Common myeloid progenitor, CD34-positive (primary cell): ENCODE measurements at regions of chr12 and their contacts with region 1.

Region 1: GRCh38 chr12:57520053-57520871 is at the start of gene DDIT3:
- DNase-seq: peak; percentile 99
- H3K4me3 ChIP-seq: peak within 1 kb of the TSS; percentile 75 to 99 (median 96)
- H3K27ac ChIP-seq: peak within 1 kb of the TSS; percentile 99 to 100
- H3K4me1 ChIP-seq: peaks cover 14 to 53% (median 52%) of the 10 kb centered on the region in 4 experiments
- H3K27me3 ChIP-seq: no peaks in the 10 kb centered on the region

Region 2: GRCh38 chr12:57476162-57476992 is 43.9 kb before region 1 on chr12:
- CTCF ChIA-PET with region 1: interaction called, 22 read pairs
- POLR2A ChIA-PET with region 1: interaction called, 19 read pairs
- DNase-seq: peak in 2 of 3 donors; percentile 80 to 83
- H3K4me3 ChIP-seq: peak overlapping the region; percentile 52 to 92 (median 76)
- H3K27ac ChIP-seq: peak overlapping the region; percentile 96
- H3K4me1 ChIP-seq: peaks cover 24 to 66% (median 61%) of the 10 kb centered on the region in 4 experiments
- H3K27me3 ChIP-seq: no peaks in the 10 kb centered on the region

Region 3: GRCh38 chr12:57535764-57536596 is 15.7 kb after region 1 on chr12:
- CTCF ChIA-PET with region 1: interaction called, 24 read pairs
- POLR2A ChIA-PET with region 1: interaction called, 13 read pairs
- DNase-seq: no peak
- H3K4me3 ChIP-seq: no peak overlapping the region
- H3K27ac ChIP-seq: no peak overlapping the region
- H3K4me1 ChIP-seq: peaks cover 0 to 11% (median 0%) of the 10 kb centered on the region in 4 experiments
- H3K27me3 ChIP-seq: no peaks in the 10 kb centered on the region

Region 4: GRCh38 chr12:57541001-57541400 is 20.7 kb after region 1 on chr12:
- CTCF ChIA-PET with region 1: interaction called, 24 read pairs
- POLR2A ChIA-PET with region 1: interaction called, 14 read pairs
- DNase-seq: no peak
- H3K4me3 ChIP-seq: no peak overlapping the region
- H3K27ac ChIP-seq: no peak overlapping the region
- H3K4me1 ChIP-seq: peaks cover 0 to 27% (median 13%) of the 10 kb centered on the region in 4 experiments
- H3K27me3 ChIP-seq: no peaks in the 10 kb centered on the region

Region 5: DNA sequence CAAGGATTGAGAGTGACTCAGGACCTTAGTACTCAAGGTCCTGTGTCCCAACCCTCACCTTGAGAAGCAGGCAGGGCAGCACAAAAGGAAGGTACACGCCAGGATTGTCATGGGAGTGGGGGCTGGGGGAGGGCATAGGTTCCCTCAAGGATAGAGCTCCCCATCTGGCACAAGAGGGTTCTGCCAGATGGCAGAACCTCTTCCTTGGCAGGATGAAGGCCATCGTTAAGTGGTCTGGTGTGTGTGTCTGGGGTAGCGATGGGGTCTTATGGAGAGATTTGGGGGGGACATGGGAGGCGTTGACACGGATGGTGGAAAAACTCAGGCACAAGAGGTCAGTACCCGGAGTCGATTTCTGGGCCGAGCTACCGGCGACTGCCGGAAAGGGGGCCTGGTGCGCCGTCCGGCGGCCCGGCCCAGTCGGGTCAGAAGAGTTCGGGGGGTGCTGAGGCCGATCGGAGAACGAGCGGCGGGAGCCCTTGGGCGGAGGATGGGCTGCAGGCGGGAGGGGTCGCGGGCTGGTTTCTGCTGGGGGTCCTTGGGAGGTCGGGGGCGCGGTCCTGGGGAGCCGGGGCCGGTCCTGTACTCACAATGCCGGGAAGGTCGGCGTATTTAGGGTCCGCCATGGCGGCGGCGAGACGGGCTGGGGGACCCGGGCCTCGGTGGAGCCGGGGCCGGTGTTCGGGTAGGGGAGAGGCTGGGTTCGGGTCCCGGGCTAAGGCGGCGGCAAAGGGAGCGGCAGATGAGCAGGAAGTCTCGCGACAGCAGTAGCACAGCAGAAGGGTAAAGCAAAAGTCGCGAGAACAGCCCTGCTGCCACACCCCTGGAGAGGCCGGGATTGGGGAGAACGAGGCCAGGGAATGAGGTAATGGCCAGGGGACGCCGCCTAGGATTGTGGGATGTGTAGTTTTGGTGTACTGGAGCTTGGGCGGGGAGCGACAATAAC is 26.4 kb after region 1 on chr12 and contains the start of gene DCTN2:
- CTCF ChIA-PET with region 1: interaction called, 12 read pairs
- POLR2A ChIA-PET with region 1: interaction called, 14 read pairs
- DNase-seq: peak; percentile 97 to 98 (median 98)
- H3K4me3 ChIP-seq: peak within 1 kb of the TSS; percentile 73 to 92 (median 83)
- H3K27ac ChIP-seq: peak within 1 kb of the TSS; percentile 81 to 91
- H3K4me1 ChIP-seq: peaks cover 0 to 38% (median 22%) of the 10 kb centered on the region in 4 experiments
- H3K27me3 ChIP-seq: peaks cover 0 to 14% (median 2%) of the 10 kb centered on the region in 5 experiments

Region 6: GRCh38 chr12:57590536-57591479 is 70.5 kb after region 1 on chr12 and contains the start of gene PIP4K2C:
- CTCF ChIA-PET with region 1: no interaction called
- POLR2A ChIA-PET with region 1: no interaction called
- DNase-seq: peak; percentile 36 to 53 (median 42)
- H3K4me3 ChIP-seq: peak within 1 kb of the TSS; percentile 64 to 91 (median 84)
- H3K27ac ChIP-seq: peak within 1 kb of the TSS in 1 of 2 experiments; percentile 66
- H3K4me1 ChIP-seq: peaks cover 5 to 22% (median 14%) of the 10 kb centered on the region in 4 experiments
- H3K27me3 ChIP-seq: peaks cover 0 to 6% (median 4%) of the 10 kb centered on the region in 5 experiments